ENCODE measurements at regions of chr1 and their contacts with region 1.

Region 1: DNA sequence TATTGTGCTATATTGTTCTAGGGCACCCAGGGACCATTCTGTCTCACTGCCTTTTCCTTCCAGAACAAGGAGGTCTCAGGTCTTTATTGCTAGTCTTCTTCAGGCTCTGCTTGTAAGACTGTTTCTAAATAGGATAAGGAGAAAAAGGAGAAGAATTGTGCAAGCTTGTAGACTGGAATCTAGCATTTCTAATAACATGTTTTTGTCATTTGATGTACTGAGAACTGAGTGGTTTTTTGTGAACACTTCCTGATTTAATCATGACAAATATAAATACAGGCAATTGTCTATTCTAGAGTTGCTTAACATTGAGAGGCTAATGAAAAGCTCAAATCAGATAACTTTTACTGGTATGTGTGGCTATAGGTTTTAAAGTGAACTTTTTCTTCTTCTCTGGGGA is 77.6 kb downstream of the CLIC4 start:
- DNase-seq: no peak
- ATAC-seq: no peak
- H3K4me3 ChIP-seq: no peak overlapping the region
- H3K27ac ChIP-seq: no peak overlapping the region
- H3K4me1 ChIP-seq: no peaks in the 10 kb centered on the region
- H3K27me3 ChIP-seq: no peaks in the 10 kb centered on the region
- CTCF ChIP-seq: no peak

Region 2: GRCh38 chr1:24754229-24754628 is 68.7 kb before region 1 on chr1:
- intact Hi-C with region 1: loop called (anchors 5 to 10 kb)
- DNase-seq: no peak
- ATAC-seq: peak in 1 of 4 donors; percentile 48
- H3K4me3 ChIP-seq: no peak overlapping the region
- H3K27ac ChIP-seq: peak overlapping the region; percentile 51
- H3K4me1 ChIP-seq: no peaks in the 10 kb centered on the region
- H3K27me3 ChIP-seq: no peaks in the 10 kb centered on the region
- CTCF ChIP-seq: no peak

Region 3: DNA sequence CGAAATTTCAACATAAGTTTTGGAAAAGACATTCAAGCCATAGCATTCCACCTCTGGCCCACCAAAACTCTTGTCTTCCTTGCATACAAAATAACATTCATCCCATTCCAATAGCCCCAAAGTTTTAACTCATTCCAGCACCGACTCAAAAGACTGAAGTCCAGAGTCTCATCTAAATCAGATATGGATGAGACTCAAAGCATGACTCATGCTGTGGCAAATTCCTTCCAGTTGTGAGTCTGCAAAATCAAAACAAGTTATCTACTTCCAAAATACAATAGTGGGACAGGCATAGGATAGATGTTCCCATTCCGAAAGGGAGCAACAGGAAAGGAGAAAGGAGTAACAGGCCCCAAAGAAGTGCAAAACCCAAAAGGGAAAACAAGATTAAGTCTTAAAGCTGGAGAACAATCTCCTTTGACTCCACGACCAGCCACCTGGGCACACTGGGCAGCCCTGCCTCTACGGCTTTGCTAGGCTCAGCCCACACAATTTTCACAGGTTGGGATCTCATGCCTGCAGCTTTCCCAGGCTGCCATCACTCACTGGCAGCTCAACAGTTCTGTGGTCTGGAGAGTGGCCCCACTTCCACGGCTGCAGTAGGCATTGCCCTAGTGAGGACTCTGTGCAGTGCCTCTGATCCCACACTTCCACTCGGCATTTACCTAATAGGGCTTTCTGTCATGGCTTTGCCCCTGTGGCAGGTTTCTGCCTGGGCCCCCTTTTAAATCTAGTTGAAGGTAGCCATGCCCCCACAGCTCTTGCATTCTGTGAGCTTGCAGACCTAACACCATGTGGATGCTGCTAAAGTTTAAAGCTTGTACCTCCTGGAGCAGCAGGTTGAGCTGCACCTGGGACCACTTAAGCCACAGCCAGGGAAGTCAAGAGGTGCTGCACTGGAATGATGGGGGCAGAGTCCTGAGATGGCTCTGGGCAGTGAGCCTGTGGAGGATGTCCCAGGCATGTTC is 56.2 kb after region 1 on chr1:
- intact Hi-C with region 1: no loop called
- DNase-seq: no peak
- ATAC-seq: no peak
- H3K4me3 ChIP-seq: no peak overlapping the region
- H3K27ac ChIP-seq: no peak overlapping the region
- H3K4me1 ChIP-seq: no peaks in the 10 kb centered on the region
- H3K27me3 ChIP-seq: peaks cover 0 to 8% (median 0%) of the 10 kb centered on the region in 3 donors
- CTCF ChIP-seq: no peak